ENCODE measurements at regions of chr14 and their contacts with region 1.

Region 1: GRCh38 chr14:34300882-34301734 is 160.9 kb downstream of the SPTSSA start:
- DNase-seq: peak; percentile 28
- ATAC-seq: peak; percentile 75
- H3K4me3 ChIP-seq: no peak overlapping the region
- H3K27ac ChIP-seq: no peak overlapping the region
- H3K4me1 ChIP-seq: peaks cover 9% of the 10 kb centered on the region in 2 experiments
- H3K27me3 ChIP-seq: no peaks in the 10 kb centered on the region
- CTCF ChIP-seq: peak; percentile 34 to 83 (median 70); a peak in 5 of 6 replicates
- POLR2A ChIP-seq: no peak
- RAD21 ChIP-seq: peak; percentile 70

Region 2: DNA sequence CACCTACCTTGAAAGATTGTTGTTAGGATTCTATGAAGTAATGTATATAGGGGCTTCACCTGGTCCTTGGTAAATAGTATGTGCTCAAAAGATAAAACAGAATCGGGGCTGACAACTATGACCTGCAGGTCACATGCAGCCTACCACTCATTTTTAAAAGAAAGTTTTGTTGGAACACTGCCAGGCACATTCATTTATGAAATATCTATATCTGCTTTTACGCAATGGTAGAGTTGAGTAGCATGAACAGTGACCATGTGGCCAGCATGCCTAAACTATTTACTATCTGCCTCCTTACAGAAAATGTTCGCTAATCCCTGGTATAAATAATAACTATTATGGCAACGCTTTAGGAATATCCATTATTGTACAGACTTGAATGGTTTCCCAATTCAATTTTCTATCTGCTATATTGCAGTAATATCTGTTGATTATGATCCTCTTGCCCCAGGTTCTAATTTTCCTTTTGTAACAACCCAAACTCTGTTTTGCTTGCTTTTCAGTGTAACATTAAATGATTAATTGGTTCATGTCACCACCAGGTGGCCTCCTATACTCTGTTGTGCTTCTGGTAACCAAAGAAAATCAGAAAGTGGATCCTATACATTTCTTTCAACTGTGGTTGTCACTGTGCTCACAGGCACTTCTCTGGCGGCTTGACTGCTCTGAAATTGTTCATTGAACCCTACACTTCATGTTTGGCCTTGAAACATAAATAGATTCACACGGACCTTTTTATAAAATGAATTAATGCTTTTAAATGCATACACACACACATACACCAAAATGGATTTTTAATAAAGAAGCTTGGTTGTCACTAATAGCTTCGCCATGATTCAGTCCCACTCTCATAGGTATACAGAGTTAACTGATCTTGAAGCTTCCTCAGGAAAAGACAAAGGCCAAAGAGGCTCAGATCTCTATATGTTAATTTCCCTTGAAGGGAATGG is 1590.1 kb before region 1 on chr14:
- CTCF ChIA-PET with region 1: interaction called, 3 read pairs
- POLR2A ChIA-PET with region 1: no interaction called
- RAD21 ChIA-PET with region 1: no interaction called
- intact Hi-C with region 1: loop called (anchors 5 kb)
- DNase-seq: peak; percentile 6
- ATAC-seq: peak; percentile 52; the same call in 1 of the 2 replicates
- H3K4me3 ChIP-seq: no peak overlapping the region
- H3K27ac ChIP-seq: no peak overlapping the region
- H3K4me1 ChIP-seq: no peaks in the 10 kb centered on the region
- H3K27me3 ChIP-seq: peaks cover 15% of the 10 kb centered on the region; the same call in 1 of the 2 replicates
- CTCF ChIP-seq: peak; percentile 33 to 56 (median 49); a peak in 5 of 6 replicates
- POLR2A ChIP-seq: no peak
- RAD21 ChIP-seq: peak; percentile 47

Region 3: GRCh38 chr14:33908540-33909223 is 392.4 kb before region 1 on chr14:
- CTCF ChIA-PET with region 1: no interaction called
- POLR2A ChIA-PET with region 1: no interaction called
- RAD21 ChIA-PET with region 1: no interaction called
- intact Hi-C with region 1: no loop called
- DNase-seq: no peak
- ATAC-seq: no peak
- H3K4me3 ChIP-seq: no peak overlapping the region
- H3K27ac ChIP-seq: no peak overlapping the region
- H3K4me1 ChIP-seq: no peaks in the 10 kb centered on the region
- H3K27me3 ChIP-seq: no peaks in the 10 kb centered on the region
- CTCF ChIP-seq: 0 out of 6 replicates have a peak, but pooled peaks of 1 of the 3 experiments have one; percentile 25
- POLR2A ChIP-seq: no peak
- RAD21 ChIP-seq: no peak

Region 4: GRCh38 chr14:33943096-33943884 is 357.8 kb before region 1 on chr14:
- CTCF ChIA-PET with region 1: no interaction called
- POLR2A ChIA-PET with region 1: no interaction called
- RAD21 ChIA-PET with region 1: no interaction called
- intact Hi-C with region 1: no loop called
- DNase-seq: no peak
- ATAC-seq: no peak
- H3K4me3 ChIP-seq: no peak overlapping the region
- H3K27ac ChIP-seq: no peak overlapping the region
- H3K4me1 ChIP-seq: peaks cover 9 to 29% of the 10 kb centered on the region in 2 experiments
- H3K27me3 ChIP-seq: no peaks in the 10 kb centered on the region
- CTCF ChIP-seq: no peak
- POLR2A ChIP-seq: no peak
- RAD21 ChIP-seq: no peak

Region 5: GRCh38 chr14:34113005-34113511 is 188.1 kb before region 1 on chr14:
- CTCF ChIA-PET with region 1: no interaction called
- POLR2A ChIA-PET with region 1: no interaction called
- RAD21 ChIA-PET with region 1: no interaction called
- intact Hi-C with region 1: loop called (anchors 10 kb)
- DNase-seq: no peak
- ATAC-seq: no peak
- H3K4me3 ChIP-seq: no peak overlapping the region
- H3K27ac ChIP-seq: no peak overlapping the region
- H3K4me1 ChIP-seq: no peaks in the 10 kb centered on the region
- H3K27me3 ChIP-seq: no peaks in the 10 kb centered on the region
- CTCF ChIP-seq: no peak
- POLR2A ChIP-seq: no peak
- RAD21 ChIP-seq: no peak

Measured in HCT116 (cell line).